Naive thymus-derived CD4-positive, alpha-beta T cell (primary cell): ENCODE measurements at regions of chr9 and their contacts with region 1.

Region 1: GRCh38 chr9:120755827-120756434 is 37.3 kb downstream of the FBXW2 start:
- DNase-seq: peak; percentile 42 to 80 (median 65)
- ATAC-seq: peak; percentile 83
- H3K4me3 ChIP-seq: no peak overlapping the region
- H3K4me3 Mint-ChIP-seq: no peak overlapping the region
- H3K27ac ChIP-seq: peak overlapping the region; percentile 22
- H3K27ac Mint-ChIP-seq: peak overlapping the region in 8 of 9 donors; percentile 5 to 77 (median 42)
- H3K4me1 ChIP-seq: no peaks in the 10 kb centered on the region
- H3K4me1 Mint-ChIP-seq: peaks cover 3 to 16% (median 7%) of the 10 kb centered on the region in 7 donors
- H3K27me3 ChIP-seq: no peaks in the 10 kb centered on the region
- H3K27me3 Mint-ChIP-seq: no peaks in the 10 kb centered on the region

Region 2: DNA sequence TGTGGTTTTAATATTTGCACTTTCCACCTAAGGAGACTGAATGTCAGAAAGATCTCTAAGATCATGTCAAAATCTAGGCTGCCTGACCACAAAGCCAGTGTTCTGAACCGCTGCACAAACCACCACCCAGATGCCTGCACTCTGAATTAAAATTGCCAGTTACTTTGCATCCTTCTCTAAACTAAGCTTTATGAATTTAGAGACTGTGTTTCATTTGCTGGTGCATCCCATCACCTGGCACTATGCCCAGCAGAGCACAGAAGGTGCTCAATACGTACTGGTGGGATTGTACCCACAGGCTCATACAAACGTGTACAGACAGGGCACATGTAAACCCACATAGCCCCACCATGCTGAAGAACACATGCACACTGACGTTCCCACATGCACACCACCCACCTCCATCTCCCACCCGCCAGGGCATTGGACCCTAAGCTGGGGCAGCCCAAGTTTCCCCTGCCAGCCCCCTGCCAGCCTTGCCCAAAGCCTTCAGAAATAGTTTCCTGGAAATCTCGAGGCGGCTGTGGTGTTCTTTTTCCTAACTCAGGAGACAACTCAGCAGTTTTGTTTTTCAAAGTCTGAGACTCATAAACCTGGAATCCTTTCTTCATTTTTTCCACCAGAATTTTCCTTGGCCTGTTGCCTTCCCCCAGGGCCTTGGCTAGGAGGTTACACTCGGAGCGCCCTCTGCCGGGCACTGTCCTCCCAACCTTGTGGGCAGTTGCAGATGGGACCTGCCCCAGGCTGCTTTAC is 180.3 kb after region 1 on chr9:
- CTCF ChIA-PET with region 1: interaction called, 3 read pairs
- POLR2A ChIA-PET with region 1: interaction called, 4 read pairs
- intact Hi-C with region 1: loop called (anchors 1 kb)
- DNase-seq: peak; percentile 71 to 89 (median 82)
- ATAC-seq: peak; percentile 85
- H3K4me3 ChIP-seq: peak overlapping the region; percentile 21
- H3K4me3 Mint-ChIP-seq: peak overlapping the region; percentile 33 to 77 (median 62)
- H3K27ac ChIP-seq: peak overlapping the region; percentile 97
- H3K27ac Mint-ChIP-seq: peak overlapping the region; percentile 88 to 100 (median 98)
- H3K4me1 ChIP-seq: peaks cover 61% of the 10 kb centered on the region in 2 donors
- H3K4me1 Mint-ChIP-seq: peaks cover 31 to 71% (median 63%) of the 10 kb centered on the region in 7 donors
- H3K27me3 ChIP-seq: no peaks in the 10 kb centered on the region
- H3K27me3 Mint-ChIP-seq: peaks cover 0 to 2% (median 0%) of the 10 kb centered on the region in 5 donors

Region 3: DNA sequence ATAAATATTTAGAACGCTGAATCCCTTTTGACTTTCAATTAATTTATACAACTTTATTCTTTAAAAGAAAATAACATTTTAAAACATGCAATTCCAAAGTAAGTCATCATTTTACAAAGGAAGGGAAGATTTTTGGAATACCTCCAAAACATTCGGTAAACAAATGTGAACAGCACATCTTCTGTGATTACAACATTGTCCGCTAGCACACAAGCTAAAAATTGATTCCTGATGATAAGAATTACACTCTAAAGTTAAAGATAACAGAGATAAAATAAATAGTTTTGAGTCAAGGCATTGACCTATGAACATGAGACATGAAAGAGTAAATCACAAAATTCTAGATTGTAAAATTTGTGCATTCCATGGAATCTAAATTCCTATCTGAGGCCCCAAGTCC is 226.9 kb after region 1 on chr9:
- CTCF ChIA-PET with region 1: interaction called, 3 read pairs
- POLR2A ChIA-PET with region 1: no interaction called
- intact Hi-C with region 1: loop called (anchors 1 to 5 kb)
- DNase-seq: no peak
- ATAC-seq: no peak
- H3K4me3 ChIP-seq: no peak overlapping the region
- H3K4me3 Mint-ChIP-seq: no peak overlapping the region
- H3K27ac ChIP-seq: no peak overlapping the region
- H3K27ac Mint-ChIP-seq: no peak overlapping the region
- H3K4me1 ChIP-seq: no peaks in the 10 kb centered on the region
- H3K4me1 Mint-ChIP-seq: peaks cover 0 to 10% (median 4%) of the 10 kb centered on the region in 7 donors
- H3K27me3 ChIP-seq: no peaks in the 10 kb centered on the region
- H3K27me3 Mint-ChIP-seq: peaks cover 0 to 30% (median 0%) of the 10 kb centered on the region in 5 donors

Region 4: DNA sequence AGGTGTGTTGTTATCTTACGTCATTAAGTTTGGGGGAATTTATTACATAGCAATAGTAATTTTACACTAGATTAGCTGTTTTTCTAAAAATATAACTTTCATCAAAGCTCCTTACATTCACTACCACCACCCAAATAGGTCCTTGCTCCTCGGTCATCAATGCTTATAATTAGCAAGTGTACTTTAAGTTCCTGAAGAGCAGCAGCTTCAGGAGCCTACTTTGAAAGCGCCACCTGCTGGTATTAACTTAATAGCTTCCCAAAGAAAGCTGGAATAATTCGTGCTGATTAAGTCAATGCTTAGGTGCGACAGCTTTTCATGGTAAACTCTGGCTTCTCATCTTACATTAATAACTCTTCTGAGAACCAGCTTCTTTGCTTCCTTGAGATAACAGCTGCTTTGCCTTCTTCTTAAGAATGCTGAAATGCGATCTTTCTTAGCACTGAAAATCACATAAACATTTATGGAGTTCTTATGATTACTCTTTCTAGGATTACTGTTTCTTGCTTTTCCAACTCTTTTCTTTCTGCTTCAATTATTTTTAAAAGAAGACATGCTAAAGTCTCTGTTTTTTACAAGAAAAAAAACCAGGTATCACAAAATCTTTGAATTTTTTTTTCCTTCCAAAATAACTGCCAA is 304.2 kb after region 1 on chr9:
- CTCF ChIA-PET with region 1: interaction called, 93 read pairs
- POLR2A ChIA-PET with region 1: interaction called, 5 read pairs
- intact Hi-C with region 1: loop called (anchors 1 kb)
- DNase-seq: peak in 7 of 9 donors; percentile 16 to 59 (median 53)
- ATAC-seq: peak; percentile 67
- H3K4me3 ChIP-seq: no peak overlapping the region
- H3K4me3 Mint-ChIP-seq: no peak overlapping the region
- H3K27ac ChIP-seq: no peak overlapping the region
- H3K27ac Mint-ChIP-seq: no peak overlapping the region
- H3K4me1 ChIP-seq: peaks cover 0 to 5% of the 10 kb centered on the region in 2 donors
- H3K4me1 Mint-ChIP-seq: peaks cover 10 to 27% (median 15%) of the 10 kb centered on the region in 7 donors
- H3K27me3 ChIP-seq: no peaks in the 10 kb centered on the region
- H3K27me3 Mint-ChIP-seq: peaks cover 0 to 5% (median 0%) of the 10 kb centered on the region in 5 donors

Region 5: GRCh38 chr9:121213136-121213806 is 457.3 kb after region 1 on chr9:
- CTCF ChIA-PET with region 1: no interaction called
- POLR2A ChIA-PET with region 1: no interaction called
- intact Hi-C with region 1: loop called in 1 of 2 experiments (anchors 2 kb)
- DNase-seq: peak; percentile 19 to 69 (median 51)
- ATAC-seq: peak; percentile 87
- H3K4me3 ChIP-seq: no peak overlapping the region
- H3K4me3 Mint-ChIP-seq: no peak overlapping the region
- H3K27ac ChIP-seq: no peak overlapping the region
- H3K27ac Mint-ChIP-seq: peak overlapping the region in 4 of 9 donors; percentile 7 to 49 (median 19)
- H3K4me1 ChIP-seq: no peaks in the 10 kb centered on the region
- H3K4me1 Mint-ChIP-seq: peaks cover 0 to 20% (median 11%) of the 10 kb centered on the region in 7 donors
- H3K27me3 ChIP-seq: no peaks in the 10 kb centered on the region
- H3K27me3 Mint-ChIP-seq: no peaks in the 10 kb centered on the region